PC-9 (cell line): ENCODE measurements at regions of chr6 and their contacts with region 1.

Region 1: DNA sequence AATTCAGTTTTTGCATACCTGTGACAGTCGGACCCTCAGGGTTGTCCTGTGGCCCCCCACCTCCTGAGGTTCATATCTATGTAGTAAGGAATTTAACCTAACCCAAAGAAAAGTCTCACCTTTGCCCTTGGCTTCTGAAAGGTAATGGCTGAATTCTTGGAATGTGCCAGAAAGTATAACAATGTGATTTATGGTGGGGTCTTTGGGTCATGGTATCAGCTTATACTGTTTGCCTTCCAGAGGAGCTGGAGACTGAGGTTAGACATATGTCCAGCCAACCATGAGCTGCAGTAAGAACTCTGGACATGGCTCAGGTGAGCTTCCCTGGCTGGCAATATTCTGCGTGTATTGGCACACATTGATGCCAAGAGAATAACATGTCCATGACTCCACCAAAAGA is 26.9 kb downstream of the DDX43 start:
- DNase-seq: no peak
- H3K4me3 ChIP-seq: no peak overlapping the region
- H3K27ac ChIP-seq: no peak overlapping the region
- H3K4me1 ChIP-seq: no peaks in the 10 kb centered on the region
- H3K27me3 ChIP-seq: no peaks in the 10 kb centered on the region
- CTCF ChIP-seq: no peak

Region 2: DNA sequence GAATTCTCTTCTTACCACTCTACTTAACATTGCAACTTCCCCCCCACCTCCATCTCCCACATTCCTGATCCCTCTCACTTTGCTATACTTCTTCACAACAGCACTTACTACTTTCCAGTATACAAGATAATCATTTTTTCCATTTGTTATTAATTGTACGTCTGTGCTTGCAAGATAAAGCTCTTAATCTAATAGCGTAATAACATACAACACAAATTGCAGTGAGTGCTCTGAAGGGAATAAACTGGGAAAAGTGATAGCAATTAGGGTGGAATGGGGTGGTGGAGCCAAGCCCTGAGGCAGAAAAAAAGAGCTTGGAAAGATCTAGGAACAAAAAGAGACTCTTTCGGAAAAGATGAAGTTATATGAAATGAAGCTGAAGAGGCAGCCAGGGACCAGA is 22.0 kb after region 1 on chr6:
- CTCF ChIA-PET with region 1: no interaction called
- POLR2A ChIA-PET with region 1: interaction called, 16 read pairs
- intact Hi-C with region 1: no loop called
- DNase-seq: no peak
- H3K4me3 ChIP-seq: no peak overlapping the region
- H3K27ac ChIP-seq: no peak overlapping the region
- H3K4me1 ChIP-seq: no peaks in the 10 kb centered on the region
- H3K27me3 ChIP-seq: no peaks in the 10 kb centered on the region
- CTCF ChIP-seq: no peak

Region 3: GRCh38 chr6:73455865-73456629 is 34.5 kb after region 1 on chr6:
- CTCF ChIA-PET with region 1: no interaction called
- POLR2A ChIA-PET with region 1: no interaction called
- intact Hi-C with region 1: no loop called
- DNase-seq: no peak
- H3K4me3 ChIP-seq: no peak overlapping the region
- H3K27ac ChIP-seq: peak overlapping the region; percentile 24; the same call in 1 of the 2 replicates
- H3K4me1 ChIP-seq: peaks cover 15% of the 10 kb centered on the region
- H3K27me3 ChIP-seq: no peaks in the 10 kb centered on the region
- CTCF ChIP-seq: no peak

Region 4: DNA sequence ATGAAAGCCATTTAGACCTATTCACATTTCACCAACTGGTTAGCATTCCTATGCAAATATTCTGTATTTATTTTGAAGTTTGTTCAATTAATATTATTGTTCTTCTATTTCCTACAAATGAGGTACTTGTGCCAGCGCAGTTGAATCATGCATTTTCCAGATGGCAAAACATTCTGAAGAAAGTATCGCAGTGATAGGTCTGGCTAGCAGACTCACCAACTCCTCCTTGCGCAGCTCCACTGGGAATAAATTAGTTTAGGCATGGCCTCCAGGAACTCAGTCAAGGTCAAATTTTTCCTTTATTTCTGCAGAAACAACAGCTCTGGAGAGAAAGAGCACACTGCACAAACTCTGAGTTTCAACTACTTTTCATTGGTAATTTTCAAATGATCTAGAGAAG is 1346.6 kb after region 1 on chr6:
- CTCF ChIA-PET with region 1: no interaction called
- POLR2A ChIA-PET with region 1: no interaction called
- intact Hi-C with region 1: no loop called
- DNase-seq: no peak
- H3K4me3 ChIP-seq: no peak overlapping the region
- H3K27ac ChIP-seq: no peak overlapping the region
- H3K4me1 ChIP-seq: no peaks in the 10 kb centered on the region
- H3K27me3 ChIP-seq: no peaks in the 10 kb centered on the region
- CTCF ChIP-seq: no peak